Esophagus muscularis mucosa (tissue), 4 donors: ENCODE measurements at regions of chr10 and their contacts with region 1.

Region 1: DNA sequence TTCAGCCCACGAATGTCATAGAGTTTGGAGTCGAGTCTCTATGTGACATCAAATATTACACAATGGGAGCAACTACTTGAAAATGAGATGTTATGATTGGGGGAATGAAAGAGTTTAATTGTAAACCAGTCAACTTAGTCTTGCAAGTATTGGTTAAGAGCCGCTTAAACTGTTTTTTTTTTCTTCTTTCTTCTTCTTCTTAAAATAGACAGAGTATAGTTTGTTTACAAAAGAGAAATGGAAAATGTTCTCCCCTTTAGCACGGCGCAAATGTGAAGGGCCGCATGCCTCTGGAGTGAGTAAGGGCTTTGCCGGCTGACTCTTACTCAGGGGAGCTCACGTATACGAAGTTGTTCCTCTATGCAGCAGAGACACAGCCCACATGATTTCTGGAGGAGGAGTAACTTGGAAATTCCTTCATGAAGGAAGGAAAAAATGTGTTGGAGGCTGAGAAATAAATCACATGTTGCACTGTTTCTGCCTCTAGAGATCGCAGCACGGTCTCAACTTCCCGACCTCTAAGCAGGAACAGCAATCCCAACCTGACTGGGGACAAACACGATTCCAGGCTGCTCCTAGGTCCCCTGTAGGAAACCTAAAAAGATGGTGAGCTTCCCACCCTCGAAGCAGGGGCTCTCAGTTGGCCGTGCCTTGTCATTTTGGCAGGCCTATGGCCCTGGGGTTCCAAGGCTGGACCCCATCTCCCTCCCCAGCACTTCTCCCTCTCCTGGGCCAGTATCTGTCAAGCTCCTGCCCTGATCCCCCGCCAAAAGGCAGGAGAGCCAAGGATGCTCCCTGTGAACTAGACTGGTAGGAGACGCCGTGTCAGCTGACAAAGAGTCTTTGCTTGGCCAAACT is 44.8 kb downstream of the MYOF start:
- DNase-seq: peak; percentile 97
- H3K4me3 ChIP-seq: peak overlapping the region; percentile 34 to 44 (median 39)
- H3K27ac ChIP-seq: peak overlapping the region; percentile 99 to 100 (median 99)
- H3K4me1 ChIP-seq: peaks cover 59 to 98% (median 96%) of the 10 kb centered on the region in 4 donors
- H3K27me3 ChIP-seq: no peaks in the 10 kb centered on the region
- CTCF ChIP-seq: no peak
- EP300 ChIP-seq: peak; percentile 92
- POLR2A ChIP-seq: peak; percentile 23

Region 2: DNA sequence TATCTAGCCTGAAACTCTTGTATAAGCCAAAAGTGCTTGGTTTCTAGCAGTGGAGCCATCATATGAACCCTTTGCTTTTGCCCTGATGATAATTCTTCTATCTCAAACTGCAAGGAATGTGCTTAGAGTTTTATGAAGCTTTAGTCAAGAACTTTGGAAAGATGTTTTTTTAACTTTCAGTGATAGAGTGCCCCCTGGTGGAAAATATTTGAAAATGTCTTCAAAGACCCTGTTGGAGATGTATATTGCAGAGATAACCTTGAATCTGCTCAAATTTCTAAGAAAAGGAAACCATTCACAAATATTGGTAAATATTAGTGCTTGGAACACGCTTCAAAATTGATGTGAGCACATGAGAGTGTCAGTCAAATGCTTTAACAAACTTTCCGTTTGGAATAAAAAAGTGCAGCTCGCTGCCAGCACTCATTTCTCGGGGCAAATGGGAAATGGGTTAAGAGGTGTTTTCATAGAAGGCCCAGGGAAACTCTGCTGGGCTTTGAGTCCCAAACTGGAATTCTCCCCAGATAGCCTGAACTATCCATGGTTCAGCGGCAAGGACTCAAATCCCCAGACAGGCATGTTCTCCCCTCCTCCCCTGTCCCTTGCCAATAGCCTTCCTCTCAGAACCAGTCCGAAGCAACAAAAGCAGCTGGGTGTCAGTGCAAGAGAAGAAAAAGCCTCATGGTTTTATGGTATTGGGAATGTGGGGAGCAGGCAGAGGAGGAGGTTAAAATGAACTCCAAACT is 84.5 kb before region 1 on chr10:
- intact Hi-C with region 1: no loop called
- DNase-seq: peak; percentile 17
- H3K4me3 ChIP-seq: no peak overlapping the region
- H3K27ac ChIP-seq: no peak overlapping the region
- H3K4me1 ChIP-seq: no peaks in the 10 kb centered on the region
- H3K27me3 ChIP-seq: no peaks in the 10 kb centered on the region
- CTCF ChIP-seq: peak; percentile 56 to 74 (median 64)
- EP300 ChIP-seq: no peak
- POLR2A ChIP-seq: no peak

Region 3: DNA sequence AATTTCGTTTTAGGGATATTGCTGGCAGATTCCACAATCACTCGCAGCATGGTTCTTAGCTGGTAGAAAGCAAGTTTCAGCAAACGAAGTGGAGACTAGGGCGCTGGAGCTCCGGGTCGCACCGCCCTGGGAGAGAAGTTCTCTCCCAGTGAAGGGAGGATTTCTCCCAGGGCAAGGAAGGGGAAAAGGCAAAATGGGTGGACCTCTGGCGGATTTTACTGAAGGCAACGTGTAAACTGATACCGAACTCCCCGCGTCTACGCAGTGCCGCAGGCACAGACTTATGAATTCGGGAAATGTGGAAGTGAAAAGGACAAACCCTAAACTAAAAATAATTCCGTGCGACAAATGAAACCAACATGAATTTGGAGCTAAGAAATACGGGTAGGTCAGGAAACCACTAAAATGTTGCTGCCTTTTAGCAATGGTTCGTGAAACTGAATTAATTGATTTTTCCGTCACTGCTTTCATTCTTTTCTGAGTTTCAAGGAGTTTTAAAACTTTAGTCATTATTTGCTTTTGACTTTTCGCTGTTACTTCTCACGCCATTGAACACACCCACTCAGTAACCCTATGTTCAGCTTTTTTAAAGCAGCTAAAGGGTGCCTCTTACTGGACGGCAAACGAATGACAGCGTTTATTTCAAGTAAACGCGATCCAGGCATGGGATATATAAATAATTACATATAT is 45.0 kb after region 1 on chr10 and contains the start of gene MYOF:
- intact Hi-C with region 1: loop called (anchors 5 kb)
- DNase-seq: peak; percentile 92
- H3K4me3 ChIP-seq: peak within 1 kb of the TSS; percentile 62 to 71 (median 64)
- H3K27ac ChIP-seq: peak within 1 kb of the TSS; percentile 86 to 93 (median 89)
- H3K4me1 ChIP-seq: peaks cover 10 to 53% (median 48%) of the 10 kb centered on the region in 4 donors
- H3K27me3 ChIP-seq: no peaks in the 10 kb centered on the region
- CTCF ChIP-seq: peak; percentile 57 to 61 (median 58)
- EP300 ChIP-seq: no peak
- POLR2A ChIP-seq: peak; percentile 63
- total RNA-seq, gene MYOF: 71.2 to 120 (median 97.3) TPM